ENCODE measurements at regions of chr1 and their contacts with region 1.

Region 1: GRCh38 chr1:7580923-7581753 is 190.0 kb upstream of the VAMP3 start:
- DNase-seq: peak; percentile 72

Region 2: DNA sequence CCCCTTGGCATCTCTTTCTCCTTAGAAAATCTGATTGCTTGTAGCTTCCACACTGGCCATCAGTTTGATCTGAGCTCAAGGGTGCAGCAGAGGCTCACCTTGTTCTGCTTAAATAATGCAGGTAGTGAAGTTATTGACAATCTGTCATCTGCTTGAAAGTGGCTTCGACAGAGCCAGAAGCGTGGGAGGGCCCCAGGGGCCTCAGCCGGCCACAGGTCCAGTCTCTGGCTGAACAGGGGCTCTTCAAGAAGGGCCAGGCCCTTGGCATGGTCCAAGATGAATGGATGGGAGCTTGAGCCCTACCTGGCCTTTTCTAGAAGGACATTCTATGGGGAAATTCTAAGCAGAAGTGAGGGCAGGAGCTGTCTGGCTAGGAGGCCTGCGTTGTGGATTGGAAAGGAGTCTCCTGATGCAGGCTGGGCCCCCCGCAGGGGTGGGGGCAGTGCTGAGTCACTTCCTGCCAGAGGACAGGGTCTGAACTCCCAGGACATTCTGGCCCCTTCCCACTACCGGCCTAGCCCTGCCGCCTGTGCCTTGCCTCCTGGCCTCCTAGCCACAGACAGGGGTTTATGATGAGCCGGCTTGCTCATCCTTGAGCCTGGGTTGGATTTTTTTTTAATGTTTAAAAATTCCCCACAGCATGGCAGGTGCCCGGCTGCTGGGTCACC is 27.6 kb after region 1 on chr1:
- intact Hi-C with region 1: loop called in 1 of 2 experiments (anchors 2 kb)
- DNase-seq: peak; percentile 35

Measured in posterior vena cava (tissue), 2 donors.